WTC11 (cell line): ENCODE measurements at regions of chr2 and their contacts with region 1.

Region 1: DNA sequence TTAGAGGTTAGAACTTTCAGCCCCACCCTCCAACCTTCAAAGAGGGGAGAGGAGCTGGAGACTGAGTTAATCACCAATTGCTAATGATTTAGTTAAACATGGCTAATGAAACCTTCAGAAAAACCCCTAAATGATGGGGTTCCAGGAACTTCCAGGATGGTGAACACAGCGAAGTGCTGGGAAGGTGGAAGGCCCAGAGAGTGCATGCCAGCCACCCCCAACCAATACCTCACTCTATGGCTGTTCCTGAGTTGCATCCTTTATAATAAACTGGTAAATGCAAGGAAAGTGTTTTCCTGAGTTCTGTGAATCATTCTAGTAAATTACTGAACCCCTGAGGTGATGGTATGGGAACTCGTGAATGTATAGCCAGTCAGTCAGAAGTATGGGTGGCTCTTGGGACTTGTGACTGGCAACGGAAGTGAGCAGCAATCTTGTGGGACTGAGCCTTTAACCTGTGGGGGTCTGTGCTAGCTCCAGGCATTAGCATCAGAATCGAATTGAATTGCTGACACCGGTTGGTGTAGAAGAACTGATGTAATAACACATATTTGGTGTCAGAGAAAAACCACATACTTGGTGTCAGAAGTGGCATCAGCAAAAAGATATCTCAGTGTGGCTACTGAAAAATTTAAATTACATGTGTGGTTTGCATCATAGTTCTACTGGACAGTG is 37.4 kb downstream of the NPHP1 start:
- DNase-seq: peak; percentile 21
- ATAC-seq: peak; percentile 92
- H3K4me3 Mint-ChIP-seq: no peak overlapping the region
- H3K27ac Mint-ChIP-seq: no peak overlapping the region; the same call in 1 of the 2 replicates
- H3K4me1 Mint-ChIP-seq: peaks cover 20% of the 10 kb centered on the region
- H3K27me3 Mint-ChIP-seq: no peaks in the 10 kb centered on the region
- CTCF ChIP-seq: no peak

Region 2: GRCh38 chr2:110157153-110157793 is 10.2 kb before region 1 on chr2:
- CTCF ChIA-PET with region 1: interaction called, 15 read pairs
- POLR2A ChIA-PET with region 1: no interaction called
- DNase-seq: no peak
- ATAC-seq: peak; percentile 51
- H3K4me3 Mint-ChIP-seq: no peak overlapping the region
- H3K27ac Mint-ChIP-seq: no peak overlapping the region
- H3K4me1 Mint-ChIP-seq: no peaks in the 10 kb centered on the region
- H3K27me3 Mint-ChIP-seq: peaks cover 7% of the 10 kb centered on the region
- CTCF ChIP-seq: peak; percentile 32; the same call in 1 of the 2 replicates